ENCODE measurements at regions of chr14 and their contacts with region 1.

Region 1: DNA sequence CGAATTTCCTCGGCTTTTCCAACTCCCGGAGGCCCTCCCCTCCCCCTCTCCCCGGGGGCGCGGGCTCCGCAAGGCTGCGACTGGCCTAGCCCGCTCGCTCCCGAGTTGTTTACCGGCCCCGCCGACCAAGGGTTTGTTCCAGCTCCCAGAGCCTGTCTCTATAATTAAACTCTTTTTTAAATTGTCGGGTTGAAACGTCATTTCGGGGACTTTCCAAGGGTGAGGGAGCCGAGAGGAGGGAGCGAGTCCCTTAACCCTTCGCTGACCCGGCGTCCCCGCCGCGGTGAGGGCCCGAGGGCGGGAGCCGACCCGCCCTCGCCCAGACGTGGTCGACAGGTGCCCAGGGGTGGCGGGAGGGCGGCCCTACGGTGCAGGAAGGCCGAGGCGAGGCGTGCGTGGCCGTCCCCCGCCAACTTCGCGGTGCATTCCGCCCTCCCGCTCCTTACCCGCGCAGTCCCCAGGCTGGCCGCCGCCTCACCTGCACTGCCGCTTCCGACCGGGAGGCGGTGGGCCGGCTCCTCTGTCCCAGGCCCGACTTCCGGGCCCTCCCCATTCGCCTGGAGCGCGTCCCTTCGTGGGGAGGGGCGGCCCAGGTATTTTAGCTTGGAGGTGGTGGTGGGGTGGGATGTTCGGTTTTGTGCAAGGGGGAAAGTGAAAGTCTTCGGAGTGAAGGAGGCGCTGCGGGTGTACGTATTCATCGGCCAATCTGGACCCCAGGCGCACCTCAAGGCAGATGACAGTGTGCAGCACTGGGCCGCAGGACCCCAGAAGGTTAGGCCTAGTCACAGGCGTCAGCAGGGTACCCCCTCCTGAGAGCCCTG is 2.9 kb upstream of the ZFP36L1 start:
- DNase-seq: no peak
- H3K4me3 ChIP-seq: peak overlapping the region; percentile 99
- CTCF ChIP-seq: peak; percentile 80

Region 2: GRCh38 chr14:68248481-68249255 is 547.1 kb before region 1 on chr14:
- CTCF ChIA-PET with region 1: interaction called, 54 read pairs
- POLR2A ChIA-PET with region 1: interaction called, 18 read pairs
- DNase-seq: no peak
- H3K4me3 ChIP-seq: no peak overlapping the region
- CTCF ChIP-seq: peak; percentile 21

Region 3: DNA sequence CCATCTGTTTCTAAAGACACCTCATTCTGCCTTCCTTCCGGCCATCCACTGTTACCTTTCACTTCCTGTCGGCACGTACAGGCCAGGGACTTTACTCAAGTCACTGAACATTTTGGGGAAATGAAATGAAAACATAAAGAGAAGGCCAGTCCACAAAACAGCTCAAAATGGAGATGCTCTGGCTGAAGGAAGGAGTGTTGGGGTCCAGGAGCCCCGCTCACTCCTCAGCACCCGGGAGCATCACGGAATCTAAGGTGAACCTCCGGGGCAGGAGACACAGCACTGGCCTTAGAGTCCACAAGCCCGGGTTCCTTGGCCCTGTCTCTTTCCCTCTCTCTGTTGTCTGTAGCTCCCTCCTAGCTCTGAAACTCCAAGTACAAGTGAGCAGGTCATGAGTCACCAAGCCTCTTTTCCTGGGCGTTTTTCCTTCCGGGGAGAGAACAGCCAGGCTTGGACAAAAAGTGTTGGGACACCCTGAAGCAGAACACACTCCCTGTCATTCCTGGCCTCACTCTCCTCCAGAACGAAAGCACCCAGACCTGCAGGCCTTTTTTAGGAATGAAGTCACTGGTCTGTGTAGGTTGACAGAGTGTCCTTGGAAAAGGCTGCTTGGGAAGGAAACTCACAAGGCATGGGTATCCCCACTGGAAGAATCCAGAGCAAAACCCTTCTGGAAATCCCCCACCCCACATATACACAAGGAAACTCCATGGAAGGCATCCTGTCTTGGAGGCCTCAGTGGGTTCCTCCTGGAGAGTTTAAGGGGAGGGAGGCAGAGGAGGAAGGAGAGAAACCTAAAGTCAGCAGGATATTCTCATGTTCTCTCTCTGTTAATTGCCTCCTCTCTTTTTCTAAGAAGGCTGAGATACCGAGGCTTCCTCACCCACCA is 248.3 kb before region 1 on chr14:
- CTCF ChIA-PET with region 1: no interaction called
- POLR2A ChIA-PET with region 1: interaction called, 11 read pairs
- DNase-seq: peak; percentile 70
- H3K4me3 ChIP-seq: no peak overlapping the region
- CTCF ChIP-seq: no peak

Region 4: GRCh38 chr14:68695326-68695768 is 100.5 kb before region 1 on chr14:
- CTCF ChIA-PET with region 1: no interaction called
- POLR2A ChIA-PET with region 1: interaction called, 41 read pairs
- DNase-seq: peak; percentile 97
- H3K4me3 ChIP-seq: no peak overlapping the region
- CTCF ChIP-seq: no peak

Region 5: GRCh38 chr14:68807148-68807600 is 11.4 kb after region 1 on chr14:
- CTCF ChIA-PET with region 1: interaction called, 61 read pairs
- POLR2A ChIA-PET with region 1: interaction called, 17 read pairs
- DNase-seq: no peak
- H3K4me3 ChIP-seq: no peak overlapping the region
- CTCF ChIP-seq: no peak